ENCODE measurements at regions of chr7 and their contacts with region 1.

Region 1: GRCh38 chr7:101126651-101127280 is at the start of gene SERPINE1:
- DNase-seq: peak; percentile 47
- ATAC-seq: peak; percentile 79
- H3K4me3 ChIP-seq: no peak within 1 kb of the TSS; the same call in 1 of the 2 replicates
- H3K27ac ChIP-seq: no peak within 1 kb of the TSS
- H3K4me1 ChIP-seq: peaks cover 26% of the 10 kb centered on the region
- H3K27me3 ChIP-seq: no peaks in the 10 kb centered on the region
- CTCF ChIP-seq: no peak
- EP300 ChIP-seq: no peak
- POLR2A ChIP-seq: peak; percentile 71
- RAD21 ChIP-seq: no peak
- polyA plus RNA-seq, gene SERPINE1: 0.20 to 0.39 TPM

Region 2: GRCh38 chr7:100803398-100804233 is 323.1 kb before region 1 on chr7:
- CTCF ChIA-PET with region 1: no interaction called
- POLR2A ChIA-PET with region 1: no interaction called
- RAD21 ChIA-PET with region 1: no interaction called
- SMC1A ChIA-PET with region 1: no interaction called
- in situ Hi-C with region 1: no loop called
- intact Hi-C with region 1: no loop called
- DNase-seq: peak; percentile 56
- ATAC-seq: peak; percentile 98
- H3K4me3 ChIP-seq: peak overlapping the region; percentile 53
- H3K27ac ChIP-seq: peak overlapping the region; percentile 80
- H3K4me1 ChIP-seq: peaks cover 15% of the 10 kb centered on the region
- H3K27me3 ChIP-seq: no peaks in the 10 kb centered on the region
- CTCF ChIP-seq: no peak
- EP300 ChIP-seq: no peak
- POLR2A ChIP-seq: peak; percentile 47; the same call in 1 of the 2 replicates
- RAD21 ChIP-seq: no peak

Region 3: GRCh38 chr7:101085162-101085987 is 41.4 kb before region 1 on chr7 and contains the start of gene TRIM56:
- CTCF ChIA-PET with region 1: interaction called, 9 read pairs
- POLR2A ChIA-PET with region 1: interaction called, 18 read pairs
- RAD21 ChIA-PET with region 1: interaction called, 8 read pairs
- SMC1A ChIA-PET with region 1: interaction called, 4 read pairs
- in situ Hi-C with region 1: no loop called
- intact Hi-C with region 1: loop called (anchors 5 kb)
- DNase-seq: peak; percentile 49
- ATAC-seq: peak; percentile 97
- H3K4me3 ChIP-seq: peak within 1 kb of the TSS; percentile 96
- H3K27ac ChIP-seq: peak within 1 kb of the TSS; percentile 100
- H3K4me1 ChIP-seq: peaks cover 14% of the 10 kb centered on the region
- H3K27me3 ChIP-seq: no peaks in the 10 kb centered on the region
- CTCF ChIP-seq: no peak
- EP300 ChIP-seq: no peak
- POLR2A ChIP-seq: peak; percentile 85
- RAD21 ChIP-seq: no peak
- polyA plus RNA-seq, gene TRIM56: 3.2 to 8.3 TPM

Region 4: GRCh38 chr7:101108330-101108857 is 18.4 kb before region 1 on chr7:
- CTCF ChIA-PET with region 1: interaction called, 11 read pairs
- POLR2A ChIA-PET with region 1: interaction called, 24 read pairs
- RAD21 ChIA-PET with region 1: interaction called, 14 read pairs
- SMC1A ChIA-PET with region 1: interaction called, 8 read pairs
- in situ Hi-C with region 1: no loop called
- intact Hi-C with region 1: no loop called
- DNase-seq: peak; percentile 51
- ATAC-seq: peak; percentile 92
- H3K4me3 ChIP-seq: no peak overlapping the region
- H3K27ac ChIP-seq: no peak overlapping the region
- H3K4me1 ChIP-seq: peaks cover 12% of the 10 kb centered on the region
- H3K27me3 ChIP-seq: no peaks in the 10 kb centered on the region
- CTCF ChIP-seq: no peak
- EP300 ChIP-seq: no peak
- POLR2A ChIP-seq: no peak
- RAD21 ChIP-seq: no peak

Region 5: DNA sequence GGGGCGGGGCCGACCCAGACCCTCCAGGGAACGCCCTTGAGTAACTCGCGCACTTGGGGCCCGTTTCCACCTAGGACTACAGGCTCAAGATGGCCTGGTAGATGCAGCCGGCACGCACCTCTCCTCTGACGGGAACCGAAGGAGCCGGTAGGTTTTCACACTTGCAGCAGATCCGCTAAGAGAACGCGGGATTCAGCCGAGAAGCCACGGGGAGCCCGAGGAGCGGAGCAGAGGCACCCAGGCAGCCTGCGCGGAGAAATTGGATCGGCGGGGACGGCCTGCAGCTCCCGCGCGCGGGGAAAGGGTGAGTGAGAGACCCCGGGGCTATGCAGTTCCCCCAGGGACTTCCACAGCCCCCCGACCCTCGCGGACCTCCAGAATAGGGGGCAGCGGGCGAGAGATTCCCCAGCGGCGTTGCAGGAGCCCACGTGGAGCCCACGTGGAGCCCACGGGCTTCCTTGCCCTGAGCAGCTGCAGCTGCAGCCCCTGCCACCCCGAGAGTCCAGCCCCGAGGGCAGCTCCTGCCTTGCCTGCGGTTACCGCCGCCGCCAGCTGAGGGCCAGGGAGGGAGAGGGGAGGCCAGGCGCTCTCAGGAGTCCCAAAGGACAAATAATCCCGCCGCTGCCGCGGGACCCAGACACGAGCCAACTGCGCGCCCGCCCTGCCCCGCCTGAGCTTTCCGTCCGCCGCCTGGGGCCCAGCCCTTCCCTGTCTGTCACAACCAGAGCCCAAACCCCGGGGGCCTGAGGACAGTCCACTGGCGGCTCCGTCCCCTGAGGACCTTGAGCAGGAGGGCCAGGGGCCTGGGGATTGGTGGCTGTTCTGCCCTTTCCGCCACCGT is 181.7 kb after region 1 on chr7:
- CTCF ChIA-PET with region 1: no interaction called
- POLR2A ChIA-PET with region 1: no interaction called
- RAD21 ChIA-PET with region 1: no interaction called
- SMC1A ChIA-PET with region 1: no interaction called
- in situ Hi-C with region 1: no loop called
- intact Hi-C with region 1: no loop called
- DNase-seq: no peak
- ATAC-seq: peak; percentile 96
- H3K4me3 ChIP-seq: peak overlapping the region; percentile 72
- H3K27ac ChIP-seq: peak overlapping the region; percentile 44
- H3K4me1 ChIP-seq: no peaks in the 10 kb centered on the region
- H3K27me3 ChIP-seq: no peaks in the 10 kb centered on the region; a peak in 1 of 4 replicates
- CTCF ChIP-seq: no peak
- EP300 ChIP-seq: no peak
- POLR2A ChIP-seq: peak; percentile 76
- RAD21 ChIP-seq: no peak

Measured in GM12878 (cell line).